GM10248 (cell line): ENCODE measurements at regions of chr4 and their contacts with region 1.

Region 1: GRCh38 chr4:147683717-147684700 is at the start of gene PRMT9:
- DNase-seq: peak; percentile 97
- CTCF ChIP-seq: no peak

Region 2: DNA sequence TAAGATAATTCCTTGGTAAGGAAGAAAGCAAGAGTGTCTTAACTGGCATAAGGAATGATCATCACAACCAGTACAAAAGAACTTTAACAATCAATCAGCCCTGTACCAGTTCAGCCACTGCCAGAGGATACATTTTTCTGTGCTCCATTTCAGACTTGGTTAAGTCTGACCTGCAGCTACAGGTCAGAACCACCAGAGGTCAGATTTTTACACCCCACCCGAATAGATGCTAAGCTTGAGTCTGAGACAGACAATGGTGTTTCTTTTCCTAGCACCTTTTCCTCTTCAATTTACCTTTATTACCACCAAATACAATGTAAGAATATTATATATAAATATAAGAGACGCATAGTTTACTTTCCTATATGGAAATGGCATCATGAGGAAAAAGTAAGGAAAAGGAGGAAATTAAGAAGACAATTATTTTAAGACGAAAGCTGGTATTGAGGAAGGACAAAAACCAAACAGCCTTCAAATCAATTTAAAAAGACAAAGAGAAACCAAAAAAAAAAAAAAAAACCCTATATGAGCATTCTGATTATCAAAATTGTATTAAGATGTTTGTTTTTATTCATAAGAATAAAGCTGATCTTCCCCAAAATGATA is 523.0 kb before region 1 on chr4:
- CTCF ChIA-PET with region 1: no interaction called
- POLR2A ChIA-PET with region 1: no interaction called
- DNase-seq: peak; percentile 64
- CTCF ChIP-seq: peak; percentile 85

Region 3: GRCh38 chr4:147707865-147708672 is 24.1 kb after region 1 on chr4:
- CTCF ChIA-PET with region 1: interaction called, 17 read pairs
- POLR2A ChIA-PET with region 1: no interaction called
- DNase-seq: peak; percentile 52
- CTCF ChIP-seq: peak; percentile 70